WTC11 (cell line): ENCODE measurements at regions of chrX and their contacts with region 1.

Region 1: DNA sequence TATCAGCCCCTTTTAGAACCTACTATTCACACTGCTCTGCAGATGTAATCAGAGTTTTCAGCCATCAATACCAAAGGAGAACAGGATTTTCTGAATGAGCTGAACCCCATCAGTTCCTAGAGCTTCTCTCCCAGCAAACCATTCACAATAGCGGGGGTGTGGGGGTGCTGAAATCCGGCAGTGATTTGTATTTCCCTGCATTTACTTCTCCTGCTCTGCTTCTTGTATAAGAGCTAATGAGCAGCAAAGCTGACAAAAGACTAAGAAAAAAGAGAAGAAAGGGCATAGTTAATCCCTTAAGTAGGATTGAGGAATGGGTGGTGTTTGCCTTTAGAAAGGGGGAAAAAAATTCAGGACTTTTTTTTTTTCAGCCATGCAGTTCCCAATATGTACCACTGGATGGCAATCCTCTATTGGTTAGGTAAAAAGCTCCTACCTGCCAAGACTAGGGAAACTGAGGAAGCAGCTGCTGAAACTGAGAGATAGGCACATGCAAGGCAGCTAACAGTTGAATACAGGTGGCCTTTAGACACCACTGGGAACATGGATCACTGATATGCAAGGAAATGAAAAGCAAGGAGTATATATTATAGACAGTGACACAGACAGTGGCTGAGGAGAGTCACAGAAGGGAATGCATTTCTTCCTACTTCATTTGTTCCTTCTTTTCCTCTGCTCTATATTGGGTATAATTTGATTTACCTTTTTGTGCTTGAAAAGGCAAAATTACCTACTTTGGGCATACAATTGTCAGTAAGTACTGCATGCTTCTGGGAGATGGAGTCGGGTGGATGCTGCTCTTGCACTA is 217.9 kb downstream of the HS6ST2 start:
- DNase-seq: no peak
- ATAC-seq: peak; percentile 19; the same call in 1 of the 2 replicates
- H3K4me3 Mint-ChIP-seq: no peak overlapping the region
- H3K27ac Mint-ChIP-seq: no peak overlapping the region
- H3K4me1 Mint-ChIP-seq: peaks cover 30% of the 10 kb centered on the region
- H3K27me3 Mint-ChIP-seq: peaks cover 73% of the 10 kb centered on the region
- CTCF ChIP-seq: peak; percentile 65

Region 2: GRCh38 chrX:132948648-132949260 is 208.2 kb after region 1 on chrX:
- CTCF ChIA-PET with region 1: interaction called, 14 read pairs
- POLR2A ChIA-PET with region 1: no interaction called
- DNase-seq: no peak
- ATAC-seq: no peak
- H3K4me3 Mint-ChIP-seq: no peak overlapping the region
- H3K27ac Mint-ChIP-seq: no peak overlapping the region
- H3K4me1 Mint-ChIP-seq: peaks cover 9% of the 10 kb centered on the region
- H3K27me3 Mint-ChIP-seq: peaks cover 3% of the 10 kb centered on the region; the same call in 1 of the 2 replicates
- CTCF ChIP-seq: peak; percentile 43

Region 3: DNA sequence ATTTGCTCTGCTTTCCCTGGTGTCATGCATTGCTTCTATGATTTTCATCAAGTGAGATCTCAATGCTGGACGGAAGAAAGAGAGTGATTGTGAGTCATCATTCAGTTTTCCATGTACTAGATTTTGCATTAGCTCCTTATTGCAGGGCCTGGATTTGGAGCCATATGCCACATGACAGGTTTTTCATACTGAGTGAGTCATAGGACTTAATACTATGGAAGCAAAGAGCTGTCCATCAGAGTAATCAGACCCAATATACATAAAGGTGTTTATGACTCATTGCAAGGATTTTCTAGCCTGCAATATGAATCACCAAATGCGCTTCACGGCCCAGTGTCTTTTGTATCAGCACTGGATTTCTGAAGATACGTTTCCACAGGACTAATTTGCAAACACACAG is 488.8 kb after region 1 on chrX:
- CTCF ChIA-PET with region 1: no interaction called
- POLR2A ChIA-PET with region 1: no interaction called
- DNase-seq: no peak
- ATAC-seq: no peak
- H3K4me3 Mint-ChIP-seq: no peak overlapping the region
- H3K27ac Mint-ChIP-seq: no peak overlapping the region
- H3K4me1 Mint-ChIP-seq: no peaks in the 10 kb centered on the region
- H3K27me3 Mint-ChIP-seq: peaks cover 63% of the 10 kb centered on the region
- CTCF ChIP-seq: no peak